GM18951 (cell line): ENCODE measurements at regions of chr2 and their contacts with region 1.

Region 1: GRCh38 chr2:27735263-27735953 is 36.1 kb upstream of the MRPL33 start:
- POLR2A ChIP-seq: no peak

Region 2: DNA sequence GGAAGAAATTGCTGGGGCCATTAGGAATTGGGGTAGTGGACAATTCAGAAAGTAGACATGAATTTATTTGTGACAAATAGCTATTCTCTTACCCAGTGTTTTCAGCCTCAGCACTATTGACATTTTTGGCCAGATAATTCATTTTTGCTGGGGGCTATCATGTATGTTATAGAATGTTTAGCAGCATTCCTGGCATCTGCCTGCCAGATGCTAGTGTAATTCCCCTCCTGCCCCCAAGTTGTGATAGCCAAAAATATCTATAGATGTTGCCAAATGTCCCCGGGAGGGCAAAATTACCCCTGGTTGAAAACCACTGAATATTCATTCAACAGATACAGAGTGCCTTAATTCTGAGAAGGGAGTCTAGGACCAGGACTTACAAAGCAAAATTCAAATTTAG is 338.7 kb after region 1 on chr2:
- in situ Hi-C with region 1: no loop called
- POLR2A ChIP-seq: no peak

Region 3: DNA sequence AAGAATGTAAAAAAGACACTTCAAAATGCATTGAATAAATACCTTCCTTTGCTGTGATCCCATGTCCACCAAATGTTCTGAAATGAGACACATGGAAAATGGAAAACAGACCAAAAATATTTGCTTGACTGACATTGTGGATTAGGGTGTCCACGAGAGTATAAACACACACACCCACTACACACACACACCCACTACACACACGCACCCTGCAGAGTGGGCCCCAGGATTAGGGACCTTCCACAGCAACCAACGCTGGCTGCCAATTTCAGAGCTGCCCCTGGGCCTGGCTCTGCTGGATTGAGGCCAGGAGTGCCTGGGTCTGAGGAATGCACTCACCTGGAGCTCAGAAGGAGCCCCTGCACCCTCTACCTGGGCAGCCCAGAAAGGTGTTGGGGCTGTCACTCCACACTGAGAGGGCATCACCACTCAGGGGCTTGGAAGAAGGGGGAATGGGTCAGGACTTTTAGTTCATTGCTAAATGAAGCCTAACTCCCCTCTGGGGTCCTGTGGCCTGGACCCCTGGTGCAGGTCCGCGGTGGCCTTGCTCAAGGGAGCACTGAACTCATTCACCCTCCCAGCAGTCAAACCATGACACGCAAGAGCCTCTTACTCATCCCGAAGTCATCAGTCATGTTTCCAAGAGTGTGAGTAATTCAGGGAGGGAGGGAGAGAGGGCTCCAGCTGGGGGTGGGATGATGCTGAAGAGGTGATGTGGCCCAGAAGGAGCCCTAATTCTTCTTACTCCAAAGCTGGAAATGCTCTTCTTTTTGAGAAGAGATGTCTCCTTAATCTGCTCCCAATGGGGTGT is 710.2 kb after region 1 on chr2:
- in situ Hi-C with region 1: loop called (anchors 25 kb)
- POLR2A ChIP-seq: no peak